Cardiac septum (tissue), 1 donor: ENCODE measurements at regions of chr10 and their contacts with region 1.

Region 1: DNA sequence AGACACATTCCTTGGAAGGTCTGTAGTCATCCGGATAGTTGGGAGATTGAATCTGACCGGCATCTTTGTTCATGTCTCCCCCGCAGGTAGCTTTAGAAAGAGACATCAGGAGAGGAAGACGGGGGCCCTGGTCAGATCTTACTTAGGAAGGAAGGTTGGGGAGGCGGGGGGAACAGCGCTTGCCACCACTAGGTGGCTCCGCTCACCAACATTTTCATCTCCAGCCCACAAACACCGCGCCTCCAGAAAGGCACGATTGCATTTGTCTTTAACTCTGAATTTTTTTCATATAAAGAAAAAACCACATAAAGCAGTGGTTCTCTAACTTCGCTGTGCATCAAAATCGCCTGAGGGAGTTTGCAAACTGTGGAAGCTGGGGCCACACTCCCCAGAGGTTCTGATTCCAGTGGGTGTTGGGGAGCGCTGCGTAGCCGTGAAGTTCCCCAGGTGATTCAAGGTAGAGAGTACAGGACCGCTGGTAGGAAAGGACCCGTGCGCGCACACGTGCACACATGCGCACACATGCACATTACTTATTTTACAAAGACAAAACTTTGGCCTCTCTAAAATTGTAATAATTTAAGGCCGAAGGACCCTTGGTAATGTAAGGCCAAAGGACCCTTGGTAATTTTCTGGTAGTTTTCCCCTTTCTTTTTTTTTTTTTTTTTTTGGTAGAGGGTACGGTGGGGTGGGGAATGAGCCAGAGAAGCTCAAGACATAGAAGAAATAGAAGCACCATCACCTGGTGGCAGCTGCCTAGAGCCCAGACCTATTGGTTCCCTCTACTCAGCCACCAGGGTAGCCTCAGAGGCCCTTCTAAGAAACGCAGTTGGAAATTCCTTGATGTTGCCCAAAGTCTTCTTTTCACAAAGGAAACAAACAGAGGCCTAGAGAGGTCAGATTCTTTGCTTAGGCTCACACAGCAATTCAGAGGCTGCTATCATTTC is 37.4 kb upstream of the OPALIN start:
- DNase-seq: no peak

Region 2: DNA sequence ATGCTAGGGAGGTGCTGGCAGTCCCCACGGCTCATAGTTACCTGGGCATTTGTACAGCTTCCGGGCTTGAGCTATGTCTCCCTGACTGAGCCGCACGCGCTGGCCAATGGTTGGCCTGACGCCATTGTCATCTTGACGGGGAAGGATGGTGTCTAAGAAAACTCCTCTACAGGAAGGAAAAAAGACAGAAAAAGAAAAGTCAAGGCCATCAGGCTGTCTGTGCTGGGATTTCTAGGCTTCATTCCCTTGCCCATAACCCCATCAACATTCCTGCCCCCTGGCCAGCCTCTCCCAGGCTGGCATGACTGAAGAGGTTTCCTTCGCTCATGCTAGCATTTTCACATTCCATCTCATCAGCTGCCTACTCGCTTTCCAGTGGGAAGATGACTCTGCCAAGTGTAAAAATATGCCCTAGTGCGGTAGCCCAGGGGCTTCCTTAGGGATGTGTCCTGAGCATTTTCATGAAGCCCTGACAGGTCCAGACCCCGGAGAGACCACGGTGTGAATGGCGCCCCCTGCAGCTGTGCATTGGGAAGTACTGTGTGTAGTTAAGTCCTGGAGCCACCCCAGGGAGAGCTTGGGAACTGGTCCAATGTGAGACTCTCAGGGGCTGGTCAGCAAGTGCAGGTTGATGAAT is 17.1 kb after region 1 on chr10:
- intact Hi-C with region 1: loop called (anchors 2 kb)
- DNase-seq: peak; percentile 77

Region 3: DNA sequence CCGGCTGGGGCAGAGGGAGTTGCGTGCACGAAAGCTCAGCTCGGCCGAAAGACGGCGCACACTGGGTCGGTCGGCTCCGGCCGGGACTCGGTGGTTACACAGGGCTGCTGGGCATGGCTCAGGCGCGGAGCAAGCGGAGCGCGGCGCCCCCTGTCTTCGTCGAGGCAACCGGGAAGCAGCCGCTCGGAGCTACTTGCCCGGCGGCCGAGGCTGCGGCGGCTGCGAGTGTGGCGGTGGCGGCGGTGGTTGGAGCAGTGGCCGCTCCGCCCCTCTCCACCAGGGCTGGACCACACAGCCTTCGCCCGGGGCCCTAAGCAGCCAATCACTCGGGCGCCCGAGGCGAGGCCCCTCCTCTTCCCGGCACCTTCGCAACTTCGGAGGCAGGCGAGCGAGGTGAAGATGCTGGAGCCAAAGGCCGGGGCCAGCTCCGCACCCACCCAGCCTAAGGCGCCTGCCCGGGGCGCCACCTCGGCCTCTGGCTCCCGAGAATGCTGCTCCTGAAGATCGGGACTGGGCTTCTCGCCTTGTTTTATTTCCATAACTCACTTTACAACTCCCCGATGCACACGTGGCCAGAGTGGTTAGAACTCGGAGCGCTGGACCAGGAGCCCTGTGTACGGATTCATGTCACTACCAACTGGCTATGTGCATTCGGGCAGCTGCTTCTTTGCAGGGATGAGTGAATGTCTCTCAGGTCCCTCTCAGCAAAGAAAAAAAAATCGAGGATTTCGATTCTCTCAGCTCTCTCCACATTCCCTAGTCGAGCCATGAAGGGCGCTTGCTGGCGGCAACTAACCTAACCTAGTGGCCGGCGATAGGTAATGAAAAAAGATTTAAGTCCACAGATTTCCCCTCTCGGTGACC is 117.7 kb after region 1 on chr10 and contains the start of gene TLL2:
- intact Hi-C with region 1: loop called (anchors 2 kb)
- DNase-seq: peak; percentile 92
- total RNA-seq, gene TLL2: 3.8 TPM

Region 4: DNA sequence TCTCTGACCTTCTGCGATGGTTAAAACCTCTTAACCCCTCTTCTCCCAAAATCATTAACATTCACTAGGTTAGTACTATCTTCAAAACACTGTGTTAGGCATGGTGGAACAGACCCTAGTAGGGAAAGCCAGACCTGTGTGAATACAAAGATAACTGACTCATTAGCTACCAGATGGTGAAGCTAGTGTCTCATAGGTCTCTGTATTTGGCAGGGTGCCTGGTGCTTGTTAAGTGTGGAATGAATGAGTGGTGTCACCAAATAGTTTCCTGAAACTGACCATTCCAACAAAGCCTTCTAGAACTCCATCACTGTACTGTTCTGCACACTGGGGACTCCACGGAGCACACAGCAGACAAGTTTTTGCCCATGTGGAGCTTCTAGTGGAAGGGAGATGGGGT is 218.3 kb after region 1 on chr10:
- intact Hi-C with region 1: loop called (anchors 10 kb)
- DNase-seq: no peak

Region 5: GRCh38 chr10:96743988-96744585 is 347.9 kb after region 1 on chr10:
- intact Hi-C with region 1: loop called (anchors 10 kb)
- DNase-seq: no peak

Region 6: DNA sequence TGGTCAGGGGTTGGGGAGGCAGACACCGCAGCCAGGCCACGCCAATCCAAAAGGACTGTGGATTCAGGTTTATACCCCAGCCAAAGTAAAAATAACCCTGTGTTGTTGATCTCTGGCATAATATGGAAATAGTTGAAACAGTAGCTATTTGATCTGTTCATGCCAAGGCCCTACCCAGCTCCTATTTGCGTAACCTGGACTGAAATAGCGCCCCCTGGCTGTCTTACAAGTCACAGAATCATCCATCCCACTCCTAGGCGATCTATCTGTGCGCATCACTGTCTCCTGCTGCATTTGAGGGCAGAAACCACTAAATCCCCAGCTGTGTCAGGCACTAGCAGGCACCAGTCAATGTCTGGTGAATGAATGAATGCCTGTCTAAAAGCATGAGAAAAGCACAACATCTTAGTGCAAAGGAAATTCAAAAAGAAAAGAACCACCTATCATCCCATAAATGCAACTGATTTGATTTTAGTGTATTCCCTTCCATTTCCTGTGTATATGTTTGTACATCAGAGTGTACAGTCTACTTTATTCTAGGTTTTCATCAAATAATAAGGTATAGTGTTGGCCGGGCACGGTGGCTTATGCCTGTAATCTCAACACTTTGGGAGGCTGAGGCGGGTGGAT is 629.5 kb after region 1 on chr10:
- intact Hi-C with region 1: loop called (anchors 5 kb)
- DNase-seq: peak; percentile 68